ENCODE measurements at regions of chr3 and their contacts with region 1.

Region 1: DNA sequence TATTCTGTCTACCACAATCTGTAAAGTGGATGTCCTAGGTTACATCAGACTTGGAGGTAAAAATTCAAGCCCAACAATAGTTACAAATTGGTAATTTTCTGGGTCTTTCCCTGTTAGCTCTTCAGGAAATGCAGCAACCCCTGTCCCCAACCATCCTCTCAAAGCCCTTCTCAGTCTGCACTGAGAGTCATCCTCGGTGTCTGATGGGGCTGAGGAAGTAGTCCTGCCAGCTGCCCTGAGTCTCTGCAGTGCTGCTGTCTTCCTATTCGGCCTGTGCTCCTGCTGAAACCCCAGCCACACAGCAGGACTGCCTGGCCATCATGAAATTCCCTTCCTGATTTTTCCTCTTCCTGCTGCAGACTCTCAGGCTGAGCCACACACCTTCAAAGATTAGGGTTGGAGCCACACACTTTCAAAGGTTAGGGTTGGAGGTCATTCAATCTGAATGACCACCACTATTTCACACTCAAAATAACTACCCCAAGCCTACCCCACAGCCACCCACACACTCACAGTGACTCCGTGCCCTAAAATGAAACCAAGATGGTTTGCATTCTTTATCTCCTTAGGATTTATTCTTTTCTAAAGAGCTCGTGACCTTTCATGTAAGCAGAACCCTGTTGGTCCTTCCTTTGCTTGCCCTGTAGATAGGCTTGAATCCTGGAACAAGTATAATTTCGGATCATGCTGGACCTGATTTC is 17.6 kb downstream of the TRIM42 start:
- DNase-seq: no peak
- ATAC-seq: peak; percentile 72
- H3K4me3 ChIP-seq: no peak overlapping the region
- H3K27ac ChIP-seq: no peak overlapping the region
- H3K4me1 ChIP-seq: no peaks in the 10 kb centered on the region
- H3K27me3 ChIP-seq: no peaks in the 10 kb centered on the region; a peak in 1 of 4 replicates
- CTCF ChIP-seq: no peak
- EP300 ChIP-seq: no peak
- POLR2A ChIP-seq: no peak
- RAD21 ChIP-seq: no peak

Region 2: DNA sequence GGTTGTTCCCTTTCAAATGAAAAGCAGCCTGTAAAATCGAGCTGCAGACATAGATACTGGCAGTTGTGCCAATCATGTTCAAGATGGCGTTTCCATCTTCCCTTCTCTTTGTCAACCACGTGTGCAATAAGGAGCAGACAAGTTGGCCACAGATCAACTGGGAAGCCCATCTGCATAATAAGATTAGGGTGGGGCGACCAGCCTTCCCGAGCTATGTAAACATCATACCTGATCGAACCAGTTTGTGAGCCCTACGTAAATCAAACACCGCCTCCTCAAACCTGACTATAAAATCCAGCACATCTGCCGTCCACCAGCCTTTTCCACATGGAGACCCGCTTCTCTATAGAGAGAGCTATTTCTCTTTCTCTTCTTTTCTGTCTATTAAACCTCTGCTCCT is 19.5 kb after region 1 on chr3:
- CTCF ChIA-PET with region 1: interaction called, 3 read pairs
- POLR2A ChIA-PET with region 1: interaction called, 10 read pairs
- RAD21 ChIA-PET with region 1: no interaction called
- SMC1A ChIA-PET with region 1: interaction called, 5 read pairs
- in situ Hi-C with region 1: no loop called
- intact Hi-C with region 1: no loop called
- DNase-seq: no peak
- ATAC-seq: no peak
- H3K4me3 ChIP-seq: no peak overlapping the region
- H3K27ac ChIP-seq: no peak overlapping the region
- H3K4me1 ChIP-seq: 0 out of 2 replicates have a peak, but pooled peaks cover 4% of the 10 kb centered on the region
- H3K27me3 ChIP-seq: no peaks in the 10 kb centered on the region
- CTCF ChIP-seq: no peak
- EP300 ChIP-seq: no peak
- POLR2A ChIP-seq: no peak
- RAD21 ChIP-seq: no peak

Region 3: DNA sequence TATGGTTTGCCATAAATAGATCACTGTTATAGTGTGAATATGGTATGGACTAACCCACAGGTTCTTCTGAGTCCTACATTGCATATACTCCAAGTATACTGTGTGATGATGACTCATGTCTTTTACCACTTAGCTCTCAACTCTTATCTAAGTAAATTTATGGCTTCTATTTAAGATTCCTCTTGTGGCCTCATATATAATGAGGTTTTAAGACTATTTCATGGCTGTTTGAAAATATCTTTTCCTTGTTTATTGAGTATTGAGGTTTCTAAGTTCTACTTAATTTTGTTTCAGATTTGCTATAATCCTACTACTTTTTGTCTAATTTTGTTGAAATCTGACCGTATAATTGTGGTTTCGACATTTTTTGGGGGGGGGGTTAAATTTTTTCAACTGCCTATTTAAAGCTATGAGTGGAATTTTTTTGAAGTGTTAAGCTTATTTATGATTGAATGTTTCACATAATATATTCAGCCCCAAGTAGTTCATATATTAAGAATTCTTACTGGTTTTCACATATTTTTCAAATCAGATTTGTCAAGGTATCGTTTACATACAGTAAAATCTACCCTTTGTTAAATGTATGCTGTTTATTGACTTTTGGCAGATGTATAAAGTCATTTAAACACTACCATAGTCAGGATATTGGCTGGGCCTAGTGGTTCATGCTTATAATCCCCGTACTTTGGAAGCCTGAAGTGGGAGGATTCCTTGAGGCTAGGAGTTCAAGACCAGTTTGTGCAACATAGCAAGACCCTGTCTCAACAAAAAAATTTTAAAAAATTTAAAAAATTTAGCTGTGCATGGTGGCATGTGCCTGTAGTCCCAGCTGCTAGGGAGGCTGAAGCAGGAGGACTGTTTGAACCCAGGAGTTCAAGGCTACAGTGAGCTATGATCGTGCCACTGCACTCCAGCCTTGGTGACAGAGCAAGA is 257.8 kb after region 1 on chr3:
- CTCF ChIA-PET with region 1: no interaction called
- POLR2A ChIA-PET with region 1: no interaction called
- RAD21 ChIA-PET with region 1: no interaction called
- SMC1A ChIA-PET with region 1: no interaction called
- in situ Hi-C with region 1: no loop called
- intact Hi-C with region 1: no loop called
- DNase-seq: no peak
- ATAC-seq: peak; percentile 72
- H3K4me3 ChIP-seq: no peak overlapping the region
- H3K27ac ChIP-seq: no peak overlapping the region
- H3K4me1 ChIP-seq: no peaks in the 10 kb centered on the region; the same call in 1 of the 2 replicates
- H3K27me3 ChIP-seq: no peaks in the 10 kb centered on the region
- CTCF ChIP-seq: no peak
- EP300 ChIP-seq: no peak
- POLR2A ChIP-seq: no peak
- RAD21 ChIP-seq: no peak

Region 4: DNA sequence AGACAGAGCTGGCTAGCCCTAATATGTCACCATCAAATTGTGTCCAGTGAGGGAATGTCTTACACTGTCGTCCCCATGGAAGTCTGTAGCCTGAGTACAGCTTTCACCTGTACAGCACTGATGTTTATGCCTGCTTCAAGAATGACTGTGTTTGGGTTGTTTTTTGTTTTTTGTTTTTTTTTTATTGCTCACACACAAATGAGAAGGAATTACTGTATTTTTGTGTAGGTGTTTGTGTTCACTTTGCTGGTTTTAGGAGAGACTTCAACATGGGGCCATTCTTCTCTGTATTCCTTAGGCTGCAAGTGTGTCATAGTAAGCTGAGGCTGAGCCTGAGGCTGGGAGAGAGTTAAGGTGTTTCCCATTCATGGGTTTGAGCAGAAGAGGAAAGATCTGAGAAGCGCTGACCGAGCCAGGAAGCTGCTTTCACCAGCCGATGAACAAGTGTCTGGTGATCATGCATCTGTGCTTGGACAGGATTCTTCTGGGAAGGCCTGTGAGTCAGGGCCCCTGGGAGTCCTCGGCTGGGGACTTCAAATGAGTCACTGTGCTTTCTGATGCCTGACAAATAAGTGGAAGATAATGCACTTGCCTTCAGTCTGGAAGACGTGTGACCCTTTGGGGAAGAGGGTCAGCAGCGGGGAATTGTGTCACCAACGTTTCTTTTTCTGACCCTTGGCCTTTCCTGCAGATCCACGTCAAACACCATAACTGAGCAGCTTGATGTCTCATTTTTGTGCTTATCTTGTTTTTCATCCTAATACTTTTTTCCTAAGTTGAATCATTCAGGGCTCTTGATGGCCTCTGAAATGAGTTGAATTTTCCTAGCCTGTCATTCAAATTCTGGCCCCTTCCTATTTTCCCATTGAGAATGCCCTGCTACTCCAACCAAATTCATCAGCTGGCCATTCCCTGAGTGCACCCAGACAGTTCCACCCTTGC is 636.1 kb after region 1 on chr3:
- CTCF ChIA-PET with region 1: no interaction called
- POLR2A ChIA-PET with region 1: no interaction called
- RAD21 ChIA-PET with region 1: no interaction called
- SMC1A ChIA-PET with region 1: no interaction called
- in situ Hi-C with region 1: no loop called
- intact Hi-C with region 1: no loop called
- DNase-seq: peak; percentile 69
- ATAC-seq: peak; percentile 24
- H3K4me3 ChIP-seq: no peak overlapping the region
- H3K27ac ChIP-seq: peak overlapping the region; percentile 62
- H3K4me1 ChIP-seq: peaks cover 53% of the 10 kb centered on the region
- H3K27me3 ChIP-seq: no peaks in the 10 kb centered on the region
- CTCF ChIP-seq: no peak
- EP300 ChIP-seq: peak in 1 of 2 experiments; percentile 45; a peak in 1 of 4 replicates
- POLR2A ChIP-seq: no peak
- RAD21 ChIP-seq: no peak

Measured in GM12878 (cell line).